MCF 10A (cell line): ENCODE measurements at regions of chr9 and their contacts with region 1.

Region 1: GRCh38 chr9:126611592-126612325 is 2.0 kb upstream of the LMX1B start:
- DNase-seq: peak; percentile 64
- H3K4me3 Mint-ChIP-seq: peak overlapping the region; percentile 2
- H3K27ac Mint-ChIP-seq: no peak overlapping the region
- H3K4me1 Mint-ChIP-seq: peaks cover 11% of the 10 kb centered on the region
- H3K27me3 Mint-ChIP-seq: peaks cover 14% of the 10 kb centered on the region
- CTCF ChIP-seq: peak; percentile 83

Region 2: DNA sequence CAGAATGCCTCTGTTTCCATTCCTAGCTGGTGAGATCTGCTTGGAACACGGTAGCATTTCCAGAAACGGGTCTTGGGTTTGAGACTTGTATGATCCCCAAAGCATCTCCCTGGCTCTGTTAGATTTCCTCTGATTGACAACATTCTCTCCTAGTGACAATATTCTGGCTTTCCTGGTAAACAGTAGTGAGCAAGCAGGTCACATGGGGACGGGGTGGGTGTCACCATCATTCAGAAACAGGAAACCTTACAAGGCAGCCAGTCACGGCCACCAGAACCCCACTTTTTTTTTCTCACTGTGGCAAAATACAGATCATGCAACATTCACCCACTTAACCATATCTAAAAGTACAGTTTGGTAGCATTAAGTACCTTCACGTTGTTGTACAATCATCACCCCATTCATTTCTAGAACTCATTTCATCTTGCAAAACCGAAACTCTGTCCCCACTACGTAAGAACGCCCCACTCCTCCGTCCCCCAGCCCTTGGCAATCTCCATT is 88.1 kb before region 1 on chr9:
- CTCF ChIA-PET with region 1: no interaction called
- POLR2A ChIA-PET with region 1: no interaction called
- intact Hi-C with region 1: no loop called
- DNase-seq: no peak
- H3K4me3 Mint-ChIP-seq: no peak overlapping the region
- H3K27ac Mint-ChIP-seq: no peak overlapping the region
- H3K4me1 Mint-ChIP-seq: no peaks in the 10 kb centered on the region
- H3K27me3 Mint-ChIP-seq: peaks cover 21% of the 10 kb centered on the region
- CTCF ChIP-seq: no peak

Region 3: DNA sequence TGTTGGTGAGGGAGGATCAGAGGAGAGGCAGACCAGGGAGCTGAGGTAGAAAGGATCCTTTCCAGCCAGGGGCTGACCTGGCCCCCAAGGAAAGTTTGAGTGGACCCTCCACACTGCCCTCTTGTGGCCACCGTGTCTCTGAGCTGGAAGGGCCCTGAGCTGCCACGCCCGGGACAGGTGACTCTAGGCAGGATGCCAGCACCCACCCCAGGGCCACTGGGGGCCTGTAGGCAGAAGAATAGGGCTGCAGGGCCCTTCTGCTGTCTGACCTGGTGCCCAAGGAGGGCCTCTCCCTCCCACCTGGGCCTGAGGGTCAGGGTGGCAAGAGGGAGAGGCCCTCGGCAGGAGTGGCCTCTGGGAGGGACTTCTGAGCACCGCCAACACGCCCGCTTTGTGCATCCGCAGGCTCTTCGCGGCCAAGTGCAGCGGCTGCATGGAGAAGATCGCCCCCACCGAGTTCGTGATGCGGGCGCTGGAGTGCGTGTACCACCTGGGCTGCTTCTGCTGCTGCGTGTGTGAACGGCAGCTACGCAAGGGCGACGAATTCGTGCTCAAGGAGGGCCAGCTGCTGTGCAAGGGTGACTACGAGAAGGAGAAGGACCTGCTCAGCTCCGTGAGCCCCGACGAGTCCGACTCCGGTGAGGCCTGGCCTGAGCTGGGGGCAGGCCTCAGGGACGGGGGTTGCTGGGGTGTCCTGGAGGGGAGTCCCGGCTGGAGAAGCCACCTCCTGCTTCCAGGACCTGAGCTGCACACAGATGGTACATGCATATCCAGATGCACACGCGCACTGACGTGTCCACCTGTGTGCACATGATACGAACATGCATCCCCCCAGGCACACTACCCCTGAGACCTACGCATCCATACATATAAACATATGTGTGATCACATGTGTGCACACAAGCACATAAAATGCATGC is 78.9 kb after region 1 on chr9:
- CTCF ChIA-PET with region 1: interaction called, 7 read pairs
- POLR2A ChIA-PET with region 1: no interaction called
- intact Hi-C with region 1: loop called (anchors 5 kb)
- DNase-seq: peak; percentile 54
- H3K4me3 Mint-ChIP-seq: no peak overlapping the region
- H3K27ac Mint-ChIP-seq: no peak overlapping the region
- H3K4me1 Mint-ChIP-seq: no peaks in the 10 kb centered on the region
- H3K27me3 Mint-ChIP-seq: no peaks in the 10 kb centered on the region
- CTCF ChIP-seq: peak; percentile 77

Region 4: DNA sequence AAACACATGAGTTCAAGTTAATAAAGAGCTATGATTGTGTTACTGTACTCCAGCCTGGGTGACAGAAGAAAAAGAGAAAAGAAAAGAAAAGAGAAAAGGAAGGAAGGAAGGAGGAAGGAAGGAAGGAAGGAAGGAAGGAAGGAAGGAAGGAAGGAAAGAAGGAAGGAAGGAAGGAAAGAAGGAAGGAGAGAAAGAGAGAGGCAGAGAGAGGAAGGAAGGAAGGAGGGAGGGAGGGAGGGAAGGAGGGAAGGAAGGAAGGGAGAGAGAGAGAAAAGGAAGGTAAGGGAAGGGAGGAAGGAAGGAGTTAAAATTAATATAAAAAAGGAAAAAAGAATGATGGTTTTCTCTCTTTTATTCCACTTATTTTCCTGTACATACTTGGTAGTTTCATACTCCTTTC is 103.6 kb after region 1 on chr9:
- CTCF ChIA-PET with region 1: no interaction called
- POLR2A ChIA-PET with region 1: no interaction called
- intact Hi-C with region 1: no loop called
- DNase-seq: no peak
- H3K4me3 Mint-ChIP-seq: no peak overlapping the region
- H3K27ac Mint-ChIP-seq: no peak overlapping the region
- H3K4me1 Mint-ChIP-seq: peaks cover 11% of the 10 kb centered on the region
- H3K27me3 Mint-ChIP-seq: peaks cover 39% of the 10 kb centered on the region
- CTCF ChIP-seq: no peak